ENCODE measurements at regions of chr6 and their contacts with region 1.

Region 1: GRCh38 chr6:143745166-143746133 is 67.7 kb downstream of the PHACTR2 start:
- DNase-seq: peak; percentile 48
- ATAC-seq: peak; percentile 67
- H3K4me3 ChIP-seq: peak overlapping the region; percentile 51
- H3K27ac ChIP-seq: peak overlapping the region; percentile 28
- H3K4me1 ChIP-seq: peaks cover 20% of the 10 kb centered on the region
- H3K27me3 ChIP-seq: no peaks in the 10 kb centered on the region
- CTCF ChIP-seq: no peak

Region 2: GRCh38 chr6:143478479-143479062 is 266.9 kb before region 1 on chr6:
- CTCF ChIA-PET with region 1: no interaction called
- POLR2A ChIA-PET with region 1: no interaction called
- intact Hi-C with region 1: no loop called
- DNase-seq: no peak
- ATAC-seq: no peak
- H3K4me3 ChIP-seq: no peak overlapping the region
- H3K27ac ChIP-seq: no peak overlapping the region
- H3K4me1 ChIP-seq: no peaks in the 10 kb centered on the region
- H3K27me3 ChIP-seq: no peaks in the 10 kb centered on the region
- CTCF ChIP-seq: no peak

Region 3: DNA sequence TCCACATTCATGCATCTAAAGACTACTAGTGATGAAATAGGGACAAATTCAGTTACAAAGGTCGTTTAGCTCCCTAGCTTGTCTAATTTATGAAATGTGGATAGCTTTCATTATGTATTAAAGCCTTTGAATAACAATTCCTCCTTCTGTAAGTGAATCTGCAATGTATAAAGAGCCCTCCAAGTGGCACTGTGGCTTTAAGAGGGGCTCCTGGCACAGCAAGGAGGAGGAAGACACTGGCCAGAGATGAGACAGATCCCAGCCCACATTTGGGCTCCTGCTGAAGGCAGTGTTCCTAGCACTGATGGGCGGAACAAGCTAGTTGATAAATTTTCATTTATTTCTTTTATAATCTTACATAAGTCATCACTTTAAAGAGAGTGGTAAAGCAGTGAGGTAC is 216.4 kb before region 1 on chr6:
- CTCF ChIA-PET with region 1: no interaction called
- POLR2A ChIA-PET with region 1: no interaction called
- intact Hi-C with region 1: no loop called
- DNase-seq: peak; percentile 7
- ATAC-seq: peak; percentile 50; the same call in 1 of the 2 replicates
- H3K4me3 ChIP-seq: no peak overlapping the region
- H3K27ac ChIP-seq: no peak overlapping the region
- H3K4me1 ChIP-seq: no peaks in the 10 kb centered on the region
- H3K27me3 ChIP-seq: no peaks in the 10 kb centered on the region
- CTCF ChIP-seq: peak; percentile 17; the same call in 1 of the 2 replicates

Region 4: GRCh38 chr6:143695130-143695968 is 50.1 kb before region 1 on chr6:
- CTCF ChIA-PET with region 1: no interaction called
- POLR2A ChIA-PET with region 1: no interaction called
- intact Hi-C with region 1: loop called (anchors 5 kb)
- DNase-seq: no peak
- ATAC-seq: no peak
- H3K4me3 ChIP-seq: no peak overlapping the region
- H3K27ac ChIP-seq: no peak overlapping the region
- H3K4me1 ChIP-seq: peaks cover 17% of the 10 kb centered on the region; the same call in 1 of the 2 replicates
- H3K27me3 ChIP-seq: no peaks in the 10 kb centered on the region
- CTCF ChIP-seq: no peak

Region 5: DNA sequence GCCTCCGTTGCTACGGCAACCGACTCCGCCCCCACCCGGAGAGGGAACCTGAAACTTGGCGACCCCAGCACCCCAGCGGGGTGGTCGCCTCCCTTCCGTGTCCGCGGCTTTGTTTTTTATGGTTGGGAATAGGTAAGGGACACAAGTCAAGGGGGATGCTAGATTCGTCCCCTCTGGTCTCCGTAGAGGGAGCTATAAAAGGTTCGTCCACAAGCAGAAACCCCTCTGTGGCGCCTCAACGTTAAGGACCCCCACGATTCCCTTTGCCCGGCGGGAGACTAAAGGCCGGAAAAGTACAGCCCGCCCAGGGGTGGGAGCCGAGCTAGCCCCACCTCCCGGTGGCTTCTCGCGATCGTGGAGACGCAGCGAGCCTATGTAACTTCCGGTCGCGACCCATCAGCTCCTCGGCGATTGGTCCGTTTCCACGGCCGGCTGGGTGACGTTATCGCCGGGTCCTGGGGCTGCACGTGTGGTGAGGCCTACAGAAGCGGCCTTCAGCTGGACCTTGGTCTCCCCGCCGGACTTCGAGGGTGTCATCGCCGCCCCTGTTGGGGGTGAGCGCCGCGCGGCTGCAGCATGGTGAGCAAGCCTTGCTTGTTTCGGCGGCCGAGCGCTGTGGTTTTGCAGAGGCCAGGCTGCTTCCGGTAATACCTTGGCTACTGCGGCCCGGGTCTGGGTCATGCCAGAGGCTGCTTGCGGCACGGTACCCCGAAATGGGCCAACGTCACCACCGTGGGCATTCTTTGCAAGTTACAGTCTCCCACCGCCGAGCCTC is 97.6 kb after region 1 on chr6 and contains the start of gene LTV1:
- CTCF ChIA-PET with region 1: no interaction called
- POLR2A ChIA-PET with region 1: no interaction called
- intact Hi-C with region 1: loop called (anchors 10 kb)
- DNase-seq: peak; percentile 92
- ATAC-seq: peak; percentile 98
- H3K4me3 ChIP-seq: peak within 1 kb of the TSS; percentile 85
- H3K27ac ChIP-seq: peak within 1 kb of the TSS; percentile 54
- H3K4me1 ChIP-seq: peaks cover 9% of the 10 kb centered on the region; the same call in 1 of the 2 replicates
- H3K27me3 ChIP-seq: no peaks in the 10 kb centered on the region
- CTCF ChIP-seq: no peak
- total RNA-seq, gene LTV1: 20.7 and 25.1 TPM in 2 replicates